Aorta (tissue), 5 donors: ENCODE measurements at regions of chr2 and their contacts with region 1.

Region 1: GRCh38 chr2:135876066-135876711 is at the start of gene MCM6:
- DNase-seq: peak; percentile 98 to 99
- ATAC-seq: peak; percentile 99
- H3K4me3 ChIP-seq: peak within 1 kb of the TSS; percentile 51 to 70
- H3K27ac ChIP-seq: peak within 1 kb of the TSS in 1 of 2 donors; percentile 7
- H3K4me1 ChIP-seq: no peaks in the 10 kb centered on the region
- H3K27me3 ChIP-seq: no peaks in the 10 kb centered on the region
- total RNA-seq, gene MCM6: 12.2 to 17.9 TPM

Region 2: DNA sequence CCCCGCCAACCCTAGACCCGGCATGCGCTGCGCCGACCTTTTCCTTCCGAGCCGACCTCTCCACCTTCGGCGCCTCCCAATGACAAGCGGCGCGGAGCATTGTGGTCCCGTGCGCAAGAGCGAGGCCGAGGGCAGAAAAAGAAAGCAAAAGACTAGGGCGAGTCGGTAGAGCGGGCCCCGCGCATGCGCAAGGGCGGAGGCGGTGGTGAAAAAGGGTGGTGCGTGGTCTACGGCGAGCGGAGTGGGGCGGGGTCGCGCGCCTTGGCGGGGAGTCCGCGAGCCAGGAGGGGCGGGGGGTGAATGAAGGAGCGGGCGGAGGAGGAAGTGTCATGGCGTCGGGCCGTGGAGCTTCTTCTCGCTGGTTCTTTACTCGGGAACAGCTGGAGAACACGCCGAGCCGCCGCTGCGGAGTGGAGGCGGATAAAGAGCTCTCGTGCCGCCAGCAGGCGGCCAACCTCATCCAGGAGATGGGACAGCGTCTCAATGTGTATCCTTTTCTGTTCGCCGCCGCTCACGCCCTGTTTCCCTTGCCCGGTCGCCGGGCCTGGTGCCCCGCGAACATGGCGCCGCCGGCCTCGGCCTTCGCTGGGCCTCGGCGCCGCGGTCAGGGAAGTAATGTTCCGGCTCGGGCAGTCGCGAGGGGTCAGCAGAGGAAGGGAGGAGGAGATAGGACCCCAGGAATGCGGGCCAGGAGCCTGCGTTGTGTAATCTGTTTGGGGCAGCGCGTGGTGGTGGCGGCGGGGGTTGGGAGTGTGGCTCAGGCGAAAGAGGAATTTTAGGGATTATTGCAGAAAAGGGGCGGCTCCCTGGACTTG is 957.5 kb before region 1 on chr2 and contains the start of gene CCNT2:
- intact Hi-C with region 1: loop called in 1 of 2 experiments (anchors 10 kb)
- DNase-seq: peak; percentile 100
- ATAC-seq: peak; percentile 98
- H3K4me3 ChIP-seq: peak within 1 kb of the TSS; percentile 83 to 86
- H3K27ac ChIP-seq: peak within 1 kb of the TSS; percentile 70 to 74
- H3K4me1 ChIP-seq: peaks cover 0 to 4% of the 10 kb centered on the region in 2 donors
- H3K27me3 ChIP-seq: no peaks in the 10 kb centered on the region
- total RNA-seq, gene CCNT2: 35.9 to 49.9 TPM

Region 3: GRCh38 chr2:135741395-135742324 is 134.5 kb before region 1 on chr2 and contains the start of gene UBXN4:
- intact Hi-C with region 1: loop called in 1 of 2 experiments (anchors 5 kb)
- DNase-seq: peak; percentile 99
- ATAC-seq: peak; percentile 99
- H3K4me3 ChIP-seq: peak within 1 kb of the TSS; percentile 75 to 98
- H3K27ac ChIP-seq: peak within 1 kb of the TSS; percentile 93 to 97
- H3K4me1 ChIP-seq: no peaks in the 10 kb centered on the region
- H3K27me3 ChIP-seq: no peaks in the 10 kb centered on the region
- total RNA-seq, gene UBXN4: 85.8 to 96.8 TPM

Region 4: GRCh38 chr2:135839713-135840112 is 36.5 kb before region 1 on chr2:
- intact Hi-C with region 1: no loop called
- DNase-seq: no peak
- ATAC-seq: no peak
- H3K4me3 ChIP-seq: no peak overlapping the region
- H3K27ac ChIP-seq: no peak overlapping the region
- H3K4me1 ChIP-seq: no peaks in the 10 kb centered on the region
- H3K27me3 ChIP-seq: no peaks in the 10 kb centered on the region

Region 5: DNA sequence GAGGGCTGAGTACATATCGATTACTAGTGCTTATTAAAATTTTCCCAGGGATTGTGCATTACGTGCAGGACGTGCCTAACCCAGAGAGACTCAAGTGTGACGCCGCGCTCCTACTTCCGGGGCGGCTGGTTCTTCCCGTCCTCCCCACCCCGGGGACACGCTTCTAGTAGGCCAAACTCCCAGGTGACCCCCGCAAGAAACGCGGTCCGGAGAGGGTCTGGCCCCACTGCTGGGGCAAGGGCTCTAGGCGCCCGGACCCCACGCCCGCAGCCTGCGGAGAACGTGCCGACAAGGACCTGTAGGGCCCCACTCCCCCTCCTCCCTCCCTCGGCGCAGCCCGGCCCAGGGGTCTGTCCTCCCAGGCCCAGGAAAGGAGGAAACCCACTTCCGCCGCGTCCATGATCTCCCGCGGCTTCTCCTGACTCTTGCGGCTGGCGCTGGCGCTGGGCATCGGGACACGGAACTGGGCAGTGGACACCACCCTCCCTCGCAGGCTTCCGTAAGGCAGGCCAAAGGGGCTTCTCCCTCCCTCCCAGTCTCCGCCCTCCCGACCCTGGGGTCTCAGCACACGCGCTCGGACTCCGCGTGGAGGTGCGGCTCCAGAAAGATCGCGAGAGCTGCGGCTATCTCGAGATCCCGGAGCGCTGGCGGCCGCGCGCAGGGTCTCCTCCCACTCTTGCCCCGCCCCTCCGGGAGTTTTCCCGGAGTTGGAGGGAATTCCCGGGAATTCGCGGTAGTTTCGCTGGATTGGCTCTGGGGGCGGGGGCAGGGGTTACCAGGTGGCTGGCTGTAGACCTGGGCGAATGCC is 109.0 kb after region 1 on chr2 and contains the start of gene DARS1:
- intact Hi-C with region 1: loop called in 1 of 2 experiments (anchors 5 kb)
- DNase-seq: peak; percentile 96 to 98
- ATAC-seq: peak; percentile 99
- H3K4me3 ChIP-seq: peak within 1 kb of the TSS; percentile 36 to 71
- H3K27ac ChIP-seq: peak within 1 kb of the TSS; percentile 31 to 58
- H3K4me1 ChIP-seq: no peaks in the 10 kb centered on the region
- H3K27me3 ChIP-seq: no peaks in the 10 kb centered on the region
- total RNA-seq, gene DARS1: 59.8 to 67.7 TPM